WTC11 (cell line): ENCODE measurements at regions of chr7 and their contacts with region 1.

Region 1: GRCh38 chr7:69837387-69838068 is 239.3 kb downstream of the AUTS2 start:
- DNase-seq: no peak
- ATAC-seq: peak; percentile 88
- H3K4me3 Mint-ChIP-seq: no peak overlapping the region
- H3K27ac Mint-ChIP-seq: no peak overlapping the region; the same call in 1 of the 2 replicates
- H3K4me1 Mint-ChIP-seq: peaks cover 62% of the 10 kb centered on the region
- H3K27me3 Mint-ChIP-seq: peaks cover 3% of the 10 kb centered on the region
- CTCF ChIP-seq: no peak

Region 2: GRCh38 chr7:69761290-69761922 is 76.1 kb before region 1 on chr7:
- CTCF ChIA-PET with region 1: no interaction called
- POLR2A ChIA-PET with region 1: interaction called, 11 read pairs
- DNase-seq: no peak
- ATAC-seq: no peak
- H3K4me3 Mint-ChIP-seq: no peak overlapping the region
- H3K27ac Mint-ChIP-seq: no peak overlapping the region
- H3K4me1 Mint-ChIP-seq: peaks cover 26% of the 10 kb centered on the region
- H3K27me3 Mint-ChIP-seq: no peaks in the 10 kb centered on the region
- CTCF ChIP-seq: no peak